CD4-positive, alpha-beta T cell (primary cell): ENCODE measurements at regions of chr4 and their contacts with region 1.

Region 1: GRCh38 chr4:48047896-48048295 is 31.3 kb downstream of the NIPAL1 start:
- DNase-seq: no peak
- ATAC-seq: no peak
- H3K4me3 ChIP-seq: no peak overlapping the region
- H3K4me3 Mint-ChIP-seq: no peak overlapping the region
- H3K27ac ChIP-seq: no peak overlapping the region
- H3K27ac Mint-ChIP-seq: no peak overlapping the region
- H3K4me1 ChIP-seq: peaks cover 41% of the 10 kb centered on the region
- H3K4me1 Mint-ChIP-seq: peaks cover 47% of the 10 kb centered on the region
- H3K27me3 ChIP-seq: no peaks in the 10 kb centered on the region
- H3K27me3 Mint-ChIP-seq: no peaks in the 10 kb centered on the region
- CTCF ChIP-seq: no peak

Region 2: DNA sequence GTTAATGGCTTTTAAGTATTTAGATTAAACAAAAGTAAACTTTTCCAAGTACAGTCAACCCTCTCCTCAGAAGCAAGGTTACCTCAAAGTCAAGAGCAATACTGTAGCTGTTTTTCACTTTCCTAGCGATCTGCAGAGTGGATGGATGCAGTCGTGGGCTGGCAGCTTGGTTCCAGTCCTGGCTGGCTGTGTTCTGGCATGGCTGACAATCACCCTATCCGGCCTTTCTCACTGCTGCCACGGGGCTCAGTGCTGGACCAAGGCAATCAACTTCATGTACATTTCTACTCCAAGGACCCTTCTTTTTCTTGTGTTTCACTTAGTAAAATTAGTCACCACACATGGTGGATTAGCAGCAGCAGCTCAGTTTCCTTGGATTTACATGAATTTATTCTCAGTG is 808.2 kb before region 1 on chr4:
- CTCF ChIA-PET with region 1: no interaction called
- POLR2A ChIA-PET with region 1: no interaction called
- intact Hi-C with region 1: no loop called
- DNase-seq: no peak
- ATAC-seq: no peak
- H3K4me3 ChIP-seq: no peak overlapping the region
- H3K4me3 Mint-ChIP-seq: no peak overlapping the region
- H3K27ac ChIP-seq: no peak overlapping the region
- H3K27ac Mint-ChIP-seq: no peak overlapping the region
- H3K4me1 ChIP-seq: no peaks in the 10 kb centered on the region
- H3K4me1 Mint-ChIP-seq: no peaks in the 10 kb centered on the region
- H3K27me3 ChIP-seq: no peaks in the 10 kb centered on the region
- H3K27me3 Mint-ChIP-seq: no peaks in the 10 kb centered on the region
- CTCF ChIP-seq: no peak

Region 3: DNA sequence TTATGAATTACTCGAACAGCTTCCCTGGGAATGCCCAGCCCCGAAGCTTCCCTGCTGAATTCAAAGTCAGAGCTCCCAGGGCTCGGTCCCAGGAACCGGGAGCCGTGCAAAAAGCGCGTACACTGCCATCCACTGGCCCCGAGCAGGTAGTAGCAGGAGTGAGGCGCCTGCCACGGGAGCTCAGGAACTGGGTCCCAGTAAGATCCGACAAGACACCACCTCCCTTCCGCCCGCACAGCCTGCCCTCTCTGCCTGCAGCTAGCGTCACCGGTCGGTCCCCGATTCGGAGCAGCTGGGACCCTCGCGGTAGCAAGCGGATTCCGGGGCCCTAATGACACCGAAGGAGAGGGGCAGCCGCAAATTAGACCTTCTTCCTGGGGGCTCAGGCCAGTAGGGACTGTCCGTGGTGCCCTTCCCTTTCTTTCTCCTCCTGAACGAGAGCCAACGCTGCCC is 211.2 kb before region 1 on chr4:
- CTCF ChIA-PET with region 1: no interaction called
- POLR2A ChIA-PET with region 1: no interaction called
- intact Hi-C with region 1: no loop called
- DNase-seq: peak; percentile 21 to 68 (median 45)
- ATAC-seq: peak; percentile 68
- H3K4me3 ChIP-seq: peak overlapping the region; percentile 74
- H3K4me3 Mint-ChIP-seq: peak overlapping the region; percentile 91
- H3K27ac ChIP-seq: no peak overlapping the region
- H3K27ac Mint-ChIP-seq: peak overlapping the region; percentile 51
- H3K4me1 ChIP-seq: peaks cover 36% of the 10 kb centered on the region
- H3K4me1 Mint-ChIP-seq: peaks cover 37% of the 10 kb centered on the region
- H3K27me3 ChIP-seq: no peaks in the 10 kb centered on the region
- H3K27me3 Mint-ChIP-seq: peaks cover 9% of the 10 kb centered on the region
- CTCF ChIP-seq: peak; percentile 39

Region 4: GRCh38 chr4:48033825-48034413 is 14.0 kb before region 1 on chr4:
- CTCF ChIA-PET with region 1: interaction called, 11 read pairs
- POLR2A ChIA-PET with region 1: interaction called, 3 read pairs
- intact Hi-C with region 1: no loop called
- DNase-seq: peak; percentile 31 to 75 (median 51)
- ATAC-seq: peak; percentile 95
- H3K4me3 ChIP-seq: no peak overlapping the region
- H3K4me3 Mint-ChIP-seq: no peak overlapping the region
- H3K27ac ChIP-seq: no peak overlapping the region
- H3K27ac Mint-ChIP-seq: no peak overlapping the region
- H3K4me1 ChIP-seq: peaks cover 3% of the 10 kb centered on the region
- H3K4me1 Mint-ChIP-seq: peaks cover 5% of the 10 kb centered on the region
- H3K27me3 ChIP-seq: no peaks in the 10 kb centered on the region
- H3K27me3 Mint-ChIP-seq: no peaks in the 10 kb centered on the region
- CTCF ChIP-seq: peak; percentile 84

Region 5: DNA sequence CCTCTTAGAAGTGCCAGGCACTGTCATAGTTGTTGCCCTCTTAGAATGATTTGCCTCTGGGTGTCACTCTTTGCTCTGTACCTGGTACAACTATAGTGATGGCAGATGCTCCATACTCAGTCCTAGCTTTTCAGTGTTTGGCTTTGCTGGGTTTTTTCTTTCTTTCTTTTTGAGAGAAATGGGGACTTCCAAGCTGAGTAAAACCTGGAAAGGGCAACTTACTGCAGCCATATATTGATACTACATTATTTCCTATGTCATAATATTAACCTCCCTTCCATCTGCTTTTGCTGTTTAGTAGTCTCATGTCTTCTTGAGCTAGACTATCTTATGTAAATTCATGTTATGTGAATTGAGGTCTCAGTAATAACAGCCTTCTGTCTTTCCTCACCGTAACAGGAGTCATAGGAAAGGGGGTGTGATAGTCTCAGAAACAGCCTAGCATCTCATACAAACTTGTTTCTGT is 17.7 kb after region 1 on chr4:
- CTCF ChIA-PET with region 1: no interaction called
- POLR2A ChIA-PET with region 1: interaction called, 3 read pairs
- intact Hi-C with region 1: loop called in 1 of 2 experiments (anchors 2 kb)
- DNase-seq: no peak
- ATAC-seq: no peak
- H3K4me3 ChIP-seq: no peak overlapping the region
- H3K4me3 Mint-ChIP-seq: no peak overlapping the region
- H3K27ac ChIP-seq: no peak overlapping the region
- H3K27ac Mint-ChIP-seq: no peak overlapping the region
- H3K4me1 ChIP-seq: no peaks in the 10 kb centered on the region
- H3K4me1 Mint-ChIP-seq: no peaks in the 10 kb centered on the region
- H3K27me3 ChIP-seq: no peaks in the 10 kb centered on the region
- H3K27me3 Mint-ChIP-seq: no peaks in the 10 kb centered on the region
- CTCF ChIP-seq: no peak

Region 6: GRCh38 chr4:48329976-48330375 is 282.1 kb after region 1 on chr4:
- CTCF ChIA-PET with region 1: no interaction called
- POLR2A ChIA-PET with region 1: no interaction called
- intact Hi-C with region 1: no loop called
- DNase-seq: no peak
- ATAC-seq: no peak
- H3K4me3 ChIP-seq: no peak overlapping the region
- H3K4me3 Mint-ChIP-seq: no peak overlapping the region
- H3K27ac ChIP-seq: no peak overlapping the region
- H3K27ac Mint-ChIP-seq: no peak overlapping the region
- H3K4me1 ChIP-seq: no peaks in the 10 kb centered on the region
- H3K4me1 Mint-ChIP-seq: no peaks in the 10 kb centered on the region
- H3K27me3 ChIP-seq: peaks cover 0 to 6% of the 10 kb centered on the region in 2 experiments
- H3K27me3 Mint-ChIP-seq: no peaks in the 10 kb centered on the region
- CTCF ChIP-seq: no peak